ENCODE measurements at regions of chr3 and their contacts with region 1.

Region 1: DNA sequence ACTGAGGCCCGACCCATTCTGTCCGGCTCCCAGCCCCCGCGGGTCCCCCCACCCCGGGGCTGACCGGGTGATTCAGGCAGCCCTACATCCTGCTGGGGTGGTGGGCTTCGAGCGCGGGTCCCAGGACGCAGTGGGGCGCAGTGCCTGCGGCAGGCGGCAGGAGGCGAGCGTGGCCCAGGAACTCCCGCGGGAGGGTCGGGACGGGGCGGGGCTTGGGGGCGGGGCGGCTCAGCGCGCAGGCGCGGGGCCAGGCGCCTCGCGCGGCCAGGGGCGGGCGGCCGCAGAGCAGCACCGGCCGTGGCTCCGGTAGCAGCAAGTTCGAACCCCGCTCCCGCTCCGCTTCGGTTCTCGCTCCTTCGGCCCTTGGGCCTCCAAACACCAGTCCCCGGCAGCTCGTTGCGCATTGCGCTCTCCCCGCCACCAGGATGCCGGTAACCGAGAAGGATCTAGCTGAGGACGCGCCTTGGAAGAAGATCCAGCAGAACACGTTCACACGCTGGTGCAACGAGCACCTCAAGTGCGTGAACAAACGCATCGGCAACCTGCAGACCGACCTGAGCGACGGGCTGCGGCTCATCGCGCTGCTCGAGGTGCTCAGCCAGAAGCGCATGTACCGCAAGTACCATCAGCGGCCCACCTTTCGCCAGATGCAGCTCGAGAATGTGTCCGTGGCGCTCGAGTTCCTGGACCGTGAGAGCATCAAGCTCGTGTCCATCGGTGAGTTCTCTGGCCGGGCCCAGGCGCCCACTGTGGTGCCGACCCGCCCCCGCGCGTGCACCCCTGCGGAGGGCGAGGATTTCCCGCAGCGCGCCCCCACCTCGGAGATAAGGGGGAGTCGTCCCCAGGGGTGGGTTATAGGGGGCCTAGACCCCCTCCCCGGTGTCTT is at the start of gene FLNB:
- DNase-seq: peak; percentile 38 to 71
- H3K4me3 ChIP-seq: peak within 1 kb of the TSS; percentile 100
- H3K27ac ChIP-seq: peak within 1 kb of the TSS; percentile 69
- H3K4me1 ChIP-seq: peaks cover 53% of the 10 kb centered on the region
- H3K27me3 ChIP-seq: no peaks in the 10 kb centered on the region
- CTCF ChIP-seq: peak; percentile 74
- total RNA-seq, gene FLNB: 349 and 361 TPM in 2 replicates

Region 2: DNA sequence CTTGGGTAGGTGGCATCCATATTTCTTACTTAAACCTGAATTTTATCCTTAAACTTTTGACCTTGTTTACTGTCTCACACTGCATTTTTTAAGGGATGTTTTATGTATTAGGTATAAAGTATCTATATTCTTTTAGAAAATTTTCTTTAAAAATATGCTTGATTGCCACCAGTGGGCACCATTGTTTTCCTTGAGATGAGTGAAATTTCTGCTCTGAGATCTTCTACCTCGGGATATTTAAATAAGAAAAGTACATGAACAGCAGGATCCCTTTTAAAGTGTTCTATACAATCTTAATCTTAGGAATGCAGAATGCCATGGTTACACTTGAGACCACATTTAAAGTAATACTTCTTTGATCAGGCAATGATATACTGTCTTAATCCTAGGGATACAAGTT is 143.5 kb before region 1 on chr3:
- CTCF ChIA-PET with region 1: interaction called, 3 read pairs
- POLR2A ChIA-PET with region 1: no interaction called
- intact Hi-C with region 1: loop called (anchors 5 kb)
- DNase-seq: no peak
- H3K4me3 ChIP-seq: no peak overlapping the region
- H3K27ac ChIP-seq: 0 out of 2 replicates have a peak overlapping the region, but pooled peaks have one; percentile 9
- H3K4me1 ChIP-seq: no peaks in the 10 kb centered on the region
- H3K27me3 ChIP-seq: no peaks in the 10 kb centered on the region
- CTCF ChIP-seq: peak; percentile 64

Region 3: GRCh38 chr3:57951066-57951882 is 57.1 kb before region 1 on chr3:
- CTCF ChIA-PET with region 1: no interaction called
- POLR2A ChIA-PET with region 1: no interaction called
- intact Hi-C with region 1: loop called (anchors 10 kb)
- DNase-seq: peak; percentile 51 to 67
- H3K4me3 ChIP-seq: no peak overlapping the region
- H3K27ac ChIP-seq: peak overlapping the region; percentile 38
- H3K4me1 ChIP-seq: peaks cover 47% of the 10 kb centered on the region
- H3K27me3 ChIP-seq: no peaks in the 10 kb centered on the region
- CTCF ChIP-seq: no peak

Region 4: GRCh38 chr3:57974796-57975388 is 33.5 kb before region 1 on chr3:
- CTCF ChIA-PET with region 1: interaction called, 4 read pairs
- POLR2A ChIA-PET with region 1: interaction called, 18 read pairs
- intact Hi-C with region 1: loop called (anchors 1 kb)
- DNase-seq: peak; percentile 63 to 91
- H3K4me3 ChIP-seq: no peak overlapping the region
- H3K27ac ChIP-seq: peak overlapping the region; percentile 100
- H3K4me1 ChIP-seq: peaks cover 98% of the 10 kb centered on the region
- H3K27me3 ChIP-seq: no peaks in the 10 kb centered on the region
- CTCF ChIP-seq: no peak

Region 5: DNA sequence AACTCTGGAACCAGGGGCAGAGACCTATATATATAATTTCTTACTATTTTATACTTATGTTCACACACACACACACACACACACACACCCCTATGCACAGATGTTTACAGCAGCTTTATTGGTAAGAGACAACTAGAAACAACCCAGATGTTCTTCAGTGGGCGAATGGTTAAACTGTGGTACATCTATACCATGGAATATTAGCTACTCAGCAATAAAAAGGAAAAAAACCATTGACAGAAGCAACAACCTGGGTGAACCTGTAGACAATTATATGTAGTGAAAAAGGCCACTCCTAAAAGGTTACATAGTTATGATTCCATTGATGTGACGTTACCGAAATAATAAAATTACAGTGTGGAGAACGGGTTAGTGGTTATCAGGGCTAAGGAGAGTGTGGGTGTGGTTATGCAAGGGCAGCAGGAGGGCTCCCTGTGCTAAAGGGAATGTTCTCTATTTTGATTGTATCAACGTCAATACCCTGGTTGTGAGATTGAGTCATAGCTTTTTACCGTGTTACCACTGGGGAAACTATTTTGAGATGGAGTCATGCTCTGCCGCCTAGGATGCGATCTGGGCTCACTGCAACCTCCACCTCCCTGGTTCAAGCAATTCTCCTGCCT is 85.3 kb after region 1 on chr3:
- CTCF ChIA-PET with region 1: no interaction called
- POLR2A ChIA-PET with region 1: interaction called, 3 read pairs
- intact Hi-C with region 1: loop called (anchors 5 kb)
- DNase-seq: peak; percentile 67 to 94
- H3K4me3 ChIP-seq: no peak overlapping the region
- H3K27ac ChIP-seq: peak overlapping the region; percentile 62
- H3K4me1 ChIP-seq: peaks cover 7% of the 10 kb centered on the region; the same call in 1 of the 2 replicates
- H3K27me3 ChIP-seq: no peaks in the 10 kb centered on the region
- CTCF ChIP-seq: no peak

Region 6: DNA sequence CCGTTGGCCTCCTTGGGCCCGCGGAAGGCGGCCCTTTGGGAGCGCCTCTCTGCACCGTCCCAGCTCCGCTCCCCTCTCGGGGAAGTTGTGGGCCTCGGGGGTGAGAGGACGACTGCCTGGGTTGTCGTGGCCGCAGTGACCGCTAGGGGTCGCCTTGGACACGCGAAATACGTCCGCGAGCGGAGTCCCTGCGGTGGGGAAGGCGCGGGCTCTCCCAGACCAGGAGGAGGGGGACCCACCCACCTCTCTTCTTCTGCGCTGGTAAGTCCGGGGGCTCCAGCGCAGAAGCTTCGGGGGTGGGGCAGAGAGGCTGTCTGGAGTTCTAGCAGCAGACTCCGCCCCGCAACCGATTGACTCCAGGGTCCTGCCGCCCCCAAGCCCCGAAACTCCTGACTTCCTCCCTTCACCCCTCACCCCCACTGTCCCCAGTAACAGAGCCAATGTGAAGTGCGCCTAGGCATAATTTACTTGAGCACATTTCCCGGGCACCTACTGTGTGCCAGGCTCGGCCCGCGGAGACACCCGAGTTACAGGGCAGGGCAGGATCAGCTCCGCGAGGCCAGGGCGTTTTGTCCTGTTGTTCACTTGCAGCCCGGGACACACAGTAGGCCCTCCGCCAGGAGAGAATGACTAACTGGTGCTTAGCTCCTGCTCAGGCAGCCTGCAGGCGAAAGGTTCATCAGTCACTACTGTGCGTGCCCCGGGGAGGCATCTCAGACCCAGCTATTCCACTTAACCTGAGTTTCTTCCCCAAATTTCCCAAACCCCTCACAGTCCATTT is 169.6 kb after region 1 on chr3:
- CTCF ChIA-PET with region 1: interaction called, 4 read pairs
- POLR2A ChIA-PET with region 1: no interaction called
- intact Hi-C with region 1: loop called (anchors 5 kb)
- DNase-seq: peak in 1 of 2 experiments; percentile 80
- H3K4me3 ChIP-seq: peak overlapping the region; percentile 46; the same call in 1 of the 2 replicates
- H3K27ac ChIP-seq: no peak overlapping the region
- H3K4me1 ChIP-seq: peaks cover 13% of the 10 kb centered on the region
- H3K27me3 ChIP-seq: no peaks in the 10 kb centered on the region
- CTCF ChIP-seq: peak; percentile 90

Measured in PC-9 (cell line).